Aorta (tissue), 5 donors: ENCODE measurements at regions of chr7 and their contacts with region 1.

Region 1: DNA sequence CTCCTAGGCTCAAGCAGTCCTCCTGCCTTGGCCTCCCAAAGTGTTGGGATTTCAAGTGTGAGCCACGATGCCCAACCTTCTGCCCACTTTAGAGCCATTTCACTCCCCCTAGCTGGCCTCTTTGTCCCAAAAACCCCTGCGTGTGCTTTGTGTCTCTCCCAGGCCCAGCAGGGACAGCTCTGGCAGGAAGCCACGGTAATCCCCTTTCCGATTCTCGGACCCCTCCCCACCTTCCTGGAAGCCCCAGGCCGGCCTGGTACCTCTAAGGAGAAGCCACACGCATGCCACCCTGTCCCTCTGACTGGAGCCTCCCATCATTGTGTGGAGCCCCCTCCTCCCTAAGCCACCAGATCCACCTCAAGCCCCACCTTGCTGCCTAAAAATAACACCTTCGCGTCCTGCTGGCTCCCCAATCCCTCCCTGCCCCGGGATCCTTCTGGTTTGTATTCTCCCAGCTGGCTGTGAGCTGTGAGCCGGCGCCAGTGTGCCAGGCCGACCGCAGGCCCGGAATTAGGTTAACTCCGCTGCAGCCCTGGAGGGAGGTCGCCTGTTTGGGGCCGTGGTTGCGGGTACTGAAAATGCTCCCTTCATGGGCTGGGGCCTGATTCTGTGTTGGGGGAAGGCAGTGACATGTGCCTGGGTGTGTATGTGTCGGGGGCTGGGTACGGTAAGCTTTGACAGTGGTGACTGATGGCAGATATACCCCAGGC is 16.4 kb upstream of the SRRM3 start:
- DNase-seq: no peak
- ATAC-seq: no peak
- H3K4me3 ChIP-seq: no peak overlapping the region
- H3K27ac ChIP-seq: no peak overlapping the region
- H3K4me1 ChIP-seq: no peaks in the 10 kb centered on the region
- H3K27me3 ChIP-seq: no peaks in the 10 kb centered on the region

Region 2: DNA sequence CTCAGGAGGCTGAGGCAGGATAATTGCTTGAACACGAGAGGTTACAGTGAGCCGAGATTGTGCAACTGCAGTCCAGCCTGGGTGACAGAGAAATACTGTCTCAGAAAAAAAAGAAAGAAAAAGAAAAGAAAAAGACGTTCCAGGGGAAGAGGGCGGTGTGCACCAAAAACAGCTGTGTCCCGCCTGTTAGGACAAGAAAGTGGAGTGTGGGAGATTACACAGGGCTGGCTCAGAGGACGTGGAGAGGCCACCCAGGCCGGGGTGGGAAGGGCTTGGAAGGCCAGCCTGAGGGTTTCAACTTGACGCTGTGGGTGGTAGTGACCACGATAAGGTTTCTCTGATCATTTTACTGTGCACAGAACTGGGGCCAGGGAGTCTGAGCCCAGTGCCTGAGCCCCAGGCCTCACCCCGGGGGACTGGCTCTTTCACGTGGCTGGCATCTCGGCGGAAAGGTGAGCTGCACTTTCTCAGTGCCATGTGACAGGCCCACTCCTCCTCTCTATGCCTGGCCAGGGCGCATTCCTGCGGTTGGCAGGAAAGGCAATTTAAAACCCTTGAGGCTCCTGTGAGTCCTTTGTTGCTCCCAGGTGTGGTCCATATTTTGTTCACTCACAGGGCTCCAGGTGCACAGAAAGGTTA is 292.6 kb before region 1 on chr7:
- intact Hi-C with region 1: no loop called
- DNase-seq: peak in 1 of 2 donors; percentile 70
- ATAC-seq: peak; percentile 57
- H3K4me3 ChIP-seq: no peak overlapping the region
- H3K27ac ChIP-seq: no peak overlapping the region
- H3K4me1 ChIP-seq: no peaks in the 10 kb centered on the region
- H3K27me3 ChIP-seq: no peaks in the 10 kb centered on the region

Region 3: DNA sequence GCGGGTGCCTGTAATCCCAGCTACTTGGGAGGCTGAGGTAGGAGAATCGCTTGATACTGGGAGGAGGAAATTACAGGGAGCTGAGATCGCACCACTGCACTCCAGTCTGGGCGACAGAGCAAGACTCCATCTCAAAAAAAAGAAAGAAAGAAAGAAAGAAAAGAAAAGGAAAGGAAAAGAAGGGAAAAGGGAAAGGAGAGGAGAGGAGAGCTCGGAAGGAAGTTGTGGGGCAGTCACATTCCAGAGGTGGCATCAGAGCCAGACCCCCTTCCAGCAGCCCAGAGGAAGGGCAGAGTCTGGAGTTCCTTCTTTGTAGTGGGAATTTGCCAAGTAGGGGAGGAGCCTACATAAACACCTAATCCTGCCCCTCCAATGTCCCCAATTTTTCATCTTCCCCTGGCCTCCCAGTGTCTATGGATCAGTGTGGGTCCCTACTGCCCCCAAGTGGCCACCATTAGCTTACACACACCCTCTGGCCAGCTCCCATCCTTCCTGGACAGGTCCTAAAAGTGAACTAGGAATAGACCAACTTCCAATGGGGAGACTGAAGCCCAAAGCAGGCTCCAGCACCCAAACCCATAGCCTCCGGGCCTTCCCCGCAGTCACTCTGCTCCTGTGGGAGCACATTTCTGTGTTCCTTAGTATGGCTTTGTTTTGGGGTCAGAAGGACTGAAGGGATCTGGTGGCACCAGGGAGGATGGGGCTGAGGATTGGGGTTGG is 77.5 kb after region 1 on chr7:
- intact Hi-C with region 1: loop called in 1 of 2 experiments (anchors 10 kb)
- DNase-seq: no peak
- ATAC-seq: peak; percentile 71
- H3K4me3 ChIP-seq: no peak overlapping the region
- H3K27ac ChIP-seq: no peak overlapping the region
- H3K4me1 ChIP-seq: no peaks in the 10 kb centered on the region
- H3K27me3 ChIP-seq: peaks cover 0 to under 1% of the 10 kb centered on the region in 2 donors